Heart right ventricle (tissue), 16 donors: ENCODE measurements at regions of chr17 and their contacts with region 1.

Region 1: GRCh38 chr17:63350364-63350763 is 95.7 kb downstream of the CYB561 start:
- DNase-seq: no peak
- ATAC-seq: no peak
- H3K4me3 ChIP-seq: no peak overlapping the region
- H3K27ac ChIP-seq: peak overlapping the region in 2 of 10 donors; percentile 21 to 29
- H3K4me1 ChIP-seq: no peaks in the 10 kb centered on the region
- H3K27me3 ChIP-seq: no peaks in the 10 kb centered on the region
- CTCF ChIP-seq: no peak

Region 2: DNA sequence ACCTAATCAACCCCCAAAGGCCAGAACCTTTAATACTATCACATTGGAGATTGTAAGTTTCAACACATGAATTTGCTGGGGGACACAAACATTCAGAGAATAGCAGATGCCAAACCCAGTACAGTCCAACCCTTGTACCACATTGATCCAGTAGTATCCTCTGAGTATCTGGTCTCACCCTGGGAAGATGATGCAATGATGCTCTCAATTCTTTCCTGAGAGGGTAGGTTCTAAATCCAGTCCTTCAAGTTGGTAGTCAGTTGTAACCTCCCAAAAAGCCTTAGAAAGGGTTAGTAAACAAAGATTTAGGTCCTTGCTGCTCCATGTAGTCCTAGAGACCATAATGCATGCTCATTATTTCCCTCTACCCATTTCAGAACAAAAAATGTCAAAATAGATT is 135.7 kb before region 1 on chr17:
- intact Hi-C with region 1: no loop called
- DNase-seq: no peak
- ATAC-seq: no peak
- H3K4me3 ChIP-seq: no peak overlapping the region
- H3K27ac ChIP-seq: no peak overlapping the region
- H3K4me1 ChIP-seq: no peaks in the 10 kb centered on the region
- H3K27me3 ChIP-seq: no peaks in the 10 kb centered on the region
- CTCF ChIP-seq: no peak

Region 3: DNA sequence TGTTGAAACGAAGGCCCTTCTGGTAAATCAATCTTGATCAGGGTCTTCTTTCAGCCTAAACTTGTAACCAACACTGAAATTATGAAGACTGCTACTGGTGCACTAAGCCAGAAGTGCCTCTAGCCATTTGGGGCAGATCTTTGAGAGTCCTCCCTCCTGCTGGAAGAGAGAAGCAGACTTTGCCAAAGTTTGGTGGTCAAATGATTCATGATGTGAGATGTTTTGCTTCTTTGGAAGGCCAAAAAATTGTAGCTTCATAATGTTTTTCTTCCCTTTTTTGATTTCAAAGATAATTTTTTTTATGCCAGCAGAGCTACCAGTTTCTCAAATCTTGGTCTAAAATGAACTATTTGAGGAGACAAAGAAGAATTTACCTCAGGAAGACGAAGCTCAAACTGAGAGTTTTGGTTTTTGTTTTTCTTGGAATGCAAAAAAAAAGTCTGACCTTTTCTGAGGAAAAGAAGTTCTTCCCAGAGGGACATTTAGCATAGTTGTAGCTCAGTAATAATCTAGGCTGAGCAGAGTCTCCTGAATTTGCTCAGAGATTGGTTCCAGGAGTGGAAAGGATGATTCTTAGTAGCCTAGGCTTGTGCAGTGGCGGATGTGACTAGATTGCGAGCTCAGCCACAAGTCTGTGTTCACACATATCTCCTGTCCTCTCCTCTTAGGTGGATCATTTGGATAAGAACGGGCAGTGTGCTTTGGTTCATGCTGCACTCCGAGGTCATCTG is 44.9 kb after region 1 on chr17:
- intact Hi-C with region 1: loop called in 1 of 10 experiments (anchors 2 kb)
- DNase-seq: peak in 1 of 2 donors; percentile 27
- ATAC-seq: peak; percentile 52 to 79 (median 71)
- H3K4me3 ChIP-seq: no peak overlapping the region
- H3K27ac ChIP-seq: peak overlapping the region in 8 of 10 donors; percentile 1 to 66 (median 56)
- H3K4me1 ChIP-seq: peaks cover 0 to 39% (median 8%) of the 10 kb centered on the region in 9 donors
- H3K27me3 ChIP-seq: no peaks in the 10 kb centered on the region
- CTCF ChIP-seq: no peak

Region 4: GRCh38 chr17:63464691-63465236 is 114.4 kb after region 1 on chr17:
- intact Hi-C with region 1: no loop called
- DNase-seq: no peak
- ATAC-seq: no peak
- H3K4me3 ChIP-seq: no peak overlapping the region
- H3K27ac ChIP-seq: no peak overlapping the region
- H3K4me1 ChIP-seq: peaks cover 0 to 33% (median 6%) of the 10 kb centered on the region in 9 donors
- H3K27me3 ChIP-seq: no peaks in the 10 kb centered on the region
- CTCF ChIP-seq: no peak